ENCODE measurements at regions of chr16 and their contacts with region 1.

Region 1: GRCh38 chr16:15888072-15888976 is at the start of gene CEP20:
- DNase-seq: peak; percentile 98
- ATAC-seq: peak; percentile 99
- H3K4me3 Mint-ChIP-seq: peak within 1 kb of the TSS; percentile 99
- H3K27ac Mint-ChIP-seq: peak within 1 kb of the TSS; percentile 99
- H3K4me1 Mint-ChIP-seq: peaks cover 30% of the 10 kb centered on the region
- H3K27me3 Mint-ChIP-seq: no peaks in the 10 kb centered on the region
- CTCF ChIP-seq: no peak
- total RNA-seq, gene CEP20: 32.2 and 36.4 TPM in 2 replicates

Region 2: GRCh38 chr16:15874745-15875314 is 13.5 kb before region 1 on chr16:
- CTCF ChIA-PET with region 1: interaction called, 20 read pairs
- POLR2A ChIA-PET with region 1: interaction called, 5 read pairs
- intact Hi-C with region 1: no loop called
- DNase-seq: no peak
- ATAC-seq: no peak
- H3K4me3 Mint-ChIP-seq: no peak overlapping the region
- H3K27ac Mint-ChIP-seq: no peak overlapping the region
- H3K4me1 Mint-ChIP-seq: no peaks in the 10 kb centered on the region
- H3K27me3 Mint-ChIP-seq: no peaks in the 10 kb centered on the region
- CTCF ChIP-seq: no peak

Region 3: DNA sequence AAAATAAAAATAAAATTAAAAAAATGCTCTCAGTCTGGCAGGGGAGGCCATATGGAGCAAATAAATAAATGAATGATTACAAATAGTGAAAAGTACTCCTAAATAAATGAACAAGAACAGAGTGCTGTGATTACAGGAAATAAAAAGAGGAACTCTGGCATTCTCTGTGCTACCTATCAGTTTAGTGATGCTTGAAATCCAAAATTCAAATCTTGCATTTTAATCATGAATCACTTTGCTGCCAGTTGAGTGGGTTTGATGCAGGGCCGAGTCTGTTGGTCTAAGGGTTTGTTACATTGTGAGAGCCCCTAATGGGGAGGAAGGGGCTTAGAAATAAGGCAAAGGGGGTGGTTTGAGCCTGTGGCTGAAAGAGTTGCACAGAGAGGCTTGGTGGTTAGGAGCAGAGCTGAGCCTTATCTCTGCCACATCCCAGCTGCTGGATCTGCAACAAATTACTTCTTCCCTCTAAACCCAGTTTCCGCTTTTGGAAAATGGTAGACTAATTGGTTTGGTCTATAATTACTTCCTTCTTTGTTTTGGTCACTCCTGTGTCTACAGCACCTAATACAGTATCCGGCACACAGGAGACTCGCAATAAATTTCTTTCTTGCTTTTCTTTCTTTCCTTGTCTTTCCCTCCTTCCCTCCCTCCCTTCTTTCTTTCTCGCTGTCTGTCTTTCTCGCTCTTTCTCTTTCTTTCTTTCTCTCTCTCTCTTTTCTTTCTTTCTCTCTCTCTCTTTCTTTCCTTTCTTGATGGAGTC is 54.8 kb after region 1 on chr16:
- CTCF ChIA-PET with region 1: no interaction called
- POLR2A ChIA-PET with region 1: interaction called, 9 read pairs
- intact Hi-C with region 1: loop called (anchors 1 kb)
- DNase-seq: no peak
- ATAC-seq: peak; percentile 88
- H3K4me3 Mint-ChIP-seq: peak overlapping the region; percentile 44
- H3K27ac Mint-ChIP-seq: peak overlapping the region; percentile 79
- H3K4me1 Mint-ChIP-seq: peaks cover 22% of the 10 kb centered on the region
- H3K27me3 Mint-ChIP-seq: no peaks in the 10 kb centered on the region
- CTCF ChIP-seq: no peak

Region 4: GRCh38 chr16:15961060-15961511 is 72.8 kb after region 1 on chr16:
- CTCF ChIA-PET with region 1: no interaction called
- POLR2A ChIA-PET with region 1: interaction called, 8 read pairs
- intact Hi-C with region 1: loop called (anchors 1 kb)
- DNase-seq: no peak
- ATAC-seq: peak; percentile 86
- H3K4me3 Mint-ChIP-seq: peak overlapping the region; percentile 73
- H3K27ac Mint-ChIP-seq: peak overlapping the region; percentile 87
- H3K4me1 Mint-ChIP-seq: peaks cover 54% of the 10 kb centered on the region
- H3K27me3 Mint-ChIP-seq: no peaks in the 10 kb centered on the region
- CTCF ChIP-seq: no peak

Region 5: DNA sequence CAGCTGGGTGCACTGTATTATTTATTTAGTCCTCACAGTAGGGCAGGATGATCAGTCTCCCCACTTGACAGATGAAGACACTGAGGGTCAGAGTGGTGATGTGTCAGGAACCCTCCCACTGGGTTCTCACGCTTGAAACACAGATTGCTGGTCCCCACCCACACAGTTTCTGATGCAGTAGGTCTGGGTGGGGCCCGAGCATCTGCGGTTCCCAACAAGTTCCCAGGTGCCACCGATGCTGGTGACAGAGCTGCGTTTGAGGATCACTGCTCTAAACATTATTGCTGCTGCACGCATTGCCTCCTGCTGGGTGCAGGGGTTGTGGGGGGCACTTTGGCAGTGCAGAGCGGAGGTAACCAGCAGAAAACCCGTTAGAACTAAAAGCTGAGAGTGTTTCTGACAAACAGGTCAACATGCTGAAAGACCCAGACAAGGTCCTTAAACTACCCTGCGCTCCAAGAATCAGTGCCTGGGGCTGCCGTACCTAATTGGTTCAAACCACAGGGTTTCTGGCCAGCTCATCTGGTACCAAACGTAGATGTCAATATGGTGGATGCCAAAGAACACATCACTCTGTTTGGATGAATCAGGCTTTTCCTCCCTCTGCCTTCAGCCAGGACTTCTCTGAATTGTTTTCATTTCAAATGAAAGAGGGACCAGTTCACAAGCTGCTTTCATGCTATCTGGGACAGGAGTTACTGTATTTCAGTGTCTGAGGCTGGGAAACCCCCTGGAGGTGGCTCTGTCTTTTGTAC is 137.1 kb after region 1 on chr16:
- CTCF ChIA-PET with region 1: interaction called, 3 read pairs
- POLR2A ChIA-PET with region 1: interaction called, 6 read pairs
- intact Hi-C with region 1: loop called (anchors 5 kb)
- DNase-seq: no peak
- ATAC-seq: peak; percentile 67
- H3K4me3 Mint-ChIP-seq: no peak overlapping the region
- H3K27ac Mint-ChIP-seq: peak overlapping the region; percentile 63
- H3K4me1 Mint-ChIP-seq: peaks cover 52% of the 10 kb centered on the region
- H3K27me3 Mint-ChIP-seq: no peaks in the 10 kb centered on the region
- CTCF ChIP-seq: no peak

Measured in activated B cell treated with CpG ODN at 0.5 μM for 24 hours (primary cell).